GM10248 (cell line): ENCODE measurements at regions of chr10 and their contacts with region 1.

Region 1: GRCh38 chr10:46228563-46229071 is 58.2 kb upstream of the ANTXRL start:
- DNase-seq: peak; percentile 78
- CTCF ChIP-seq: peak; percentile 86

Region 2: DNA sequence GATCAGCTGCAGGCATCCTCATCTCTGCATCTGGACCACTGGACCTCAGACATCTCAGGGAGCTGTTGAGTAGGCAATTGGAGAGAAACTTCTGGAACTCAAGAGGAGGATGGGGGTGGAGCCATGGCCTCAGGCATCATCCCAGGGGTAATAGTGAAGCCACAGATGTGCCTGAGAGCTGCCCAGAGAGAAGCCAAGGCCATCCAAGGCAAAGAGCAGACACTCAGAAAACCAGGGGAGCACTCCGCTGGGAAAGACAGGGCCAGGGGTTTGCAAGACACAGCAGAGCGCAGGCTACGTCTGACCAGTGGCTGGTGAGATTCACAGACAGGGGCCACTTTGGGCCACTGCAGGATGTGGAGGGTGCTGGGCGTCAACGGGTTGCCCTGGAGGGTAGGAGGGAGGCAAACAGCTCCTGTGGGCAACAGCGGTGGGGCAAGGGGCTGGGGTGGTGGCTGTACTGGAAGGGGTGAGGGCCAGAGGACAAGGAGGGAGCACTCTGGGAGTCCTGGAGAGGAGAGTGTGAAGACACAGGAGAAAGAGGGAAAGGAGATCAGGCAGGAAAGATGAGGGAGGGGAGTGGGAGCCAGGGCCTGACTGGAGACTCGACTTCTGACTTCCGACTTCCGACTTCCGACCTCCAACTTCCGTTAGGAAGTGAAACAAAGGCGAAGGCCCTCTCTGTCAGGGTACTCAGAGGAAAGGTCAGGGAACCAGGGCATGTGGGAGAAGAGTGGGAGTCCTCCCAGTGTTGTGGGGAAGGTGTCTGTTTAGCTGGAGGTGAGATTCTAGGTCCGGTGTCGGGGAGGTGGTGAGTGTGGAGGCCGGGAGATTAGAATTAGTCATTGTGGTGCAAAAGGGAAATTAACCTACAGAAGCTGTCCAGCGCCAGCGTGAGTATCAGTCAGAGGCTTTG is 11.5 kb before region 1 on chr10:
- CTCF ChIA-PET with region 1: interaction called, 12 read pairs
- POLR2A ChIA-PET with region 1: no interaction called
- DNase-seq: peak; percentile 42
- CTCF ChIP-seq: no peak

Region 3: DNA sequence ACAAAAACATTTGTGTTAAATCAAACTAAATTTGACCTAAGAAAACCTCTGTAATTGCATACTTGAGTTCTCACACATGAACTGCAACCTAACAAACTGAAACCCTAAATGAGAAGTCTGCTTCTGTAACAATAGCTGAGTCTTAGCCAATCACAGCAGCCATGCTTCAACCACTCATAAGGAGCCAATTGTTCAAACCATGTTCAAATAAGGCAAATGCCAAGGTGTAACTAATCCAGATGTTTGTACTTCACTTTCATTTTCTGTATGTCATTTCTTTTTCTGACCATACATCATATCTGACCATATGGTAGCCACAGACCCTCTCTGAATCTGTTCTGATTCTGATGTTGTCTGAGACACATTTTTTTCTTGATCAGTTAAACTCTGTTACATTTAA is 10.6 kb after region 1 on chr10:
- CTCF ChIA-PET with region 1: interaction called, 26 read pairs
- POLR2A ChIA-PET with region 1: no interaction called
- DNase-seq: no peak
- CTCF ChIP-seq: no peak

Region 4: DNA sequence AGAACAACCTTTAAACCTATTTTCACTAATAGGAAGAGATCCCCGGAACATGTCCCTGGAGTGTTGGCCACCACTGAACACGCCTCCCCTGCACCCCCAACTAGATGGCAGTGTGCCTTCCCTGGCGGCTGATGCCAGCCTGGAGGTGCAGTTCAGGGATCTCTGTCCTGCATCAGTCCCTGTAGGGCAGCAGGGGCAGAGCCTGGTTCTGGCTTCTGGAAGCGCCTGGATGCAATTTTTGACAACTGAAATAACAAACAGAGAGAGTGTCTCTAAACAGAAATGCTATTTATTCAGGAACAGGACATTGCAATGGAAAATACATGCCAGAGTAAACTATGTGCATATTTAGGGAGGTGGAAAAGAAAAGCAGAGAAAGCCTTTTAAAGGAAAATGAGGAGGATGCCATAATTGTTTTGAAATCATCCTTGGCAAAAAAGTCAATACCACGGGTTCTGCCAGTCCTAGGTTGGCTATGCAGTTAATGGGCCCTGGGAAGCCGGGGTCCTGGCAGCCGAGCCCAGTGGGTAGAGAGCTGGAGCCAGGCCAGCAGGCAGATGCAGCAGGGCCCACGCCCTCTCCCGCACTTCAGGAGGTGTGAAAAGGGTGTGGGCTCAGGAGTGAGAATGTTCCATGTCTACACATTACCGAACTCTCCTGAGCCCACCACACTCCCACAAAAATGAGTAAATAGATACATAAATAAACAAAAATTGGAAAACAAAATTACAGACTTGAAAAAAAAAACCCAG is 76.6 kb after region 1 on chr10:
- CTCF ChIA-PET with region 1: no interaction called
- POLR2A ChIA-PET with region 1: no interaction called
- DNase-seq: no peak
- CTCF ChIP-seq: no peak